Mammary epithelial cell (primary cell): ENCODE measurements at regions of chrX and their contacts with region 1.

Region 1: GRCh38 chrX:10597871-10598270 is 22.5 kb downstream of the MID1 start:
- DNase-seq: no peak
- H3K4me3 ChIP-seq: no peak overlapping the region
- H3K27ac ChIP-seq: no peak overlapping the region
- H3K4me1 ChIP-seq: no peaks in the 10 kb centered on the region
- H3K27me3 ChIP-seq: no peaks in the 10 kb centered on the region
- CTCF ChIP-seq: peak; percentile 43 to 65

Region 2: GRCh38 chrX:10450229-10450958 is 147.5 kb before region 1 on chrX:
- CTCF ChIA-PET with region 1: no interaction called
- dilution Hi-C with region 1: no loop called
- in situ Hi-C with region 1: no loop called
- intact Hi-C with region 1: no loop called
- DNase-seq: peak; percentile 66
- H3K4me3 ChIP-seq: no peak overlapping the region
- H3K27ac ChIP-seq: no peak overlapping the region
- H3K4me1 ChIP-seq: peaks cover 25% of the 10 kb centered on the region
- H3K27me3 ChIP-seq: no peaks in the 10 kb centered on the region
- CTCF ChIP-seq: no peak

Region 3: GRCh38 chrX:10484676-10485247 is 113.1 kb before region 1 on chrX:
- CTCF ChIA-PET with region 1: no interaction called
- dilution Hi-C with region 1: no loop called
- in situ Hi-C with region 1: no loop called
- intact Hi-C with region 1: loop called (anchors 1 kb)
- DNase-seq: peak; percentile 79
- H3K4me3 ChIP-seq: no peak overlapping the region
- H3K27ac ChIP-seq: peak overlapping the region; percentile 72
- H3K4me1 ChIP-seq: peaks cover 25% of the 10 kb centered on the region
- H3K27me3 ChIP-seq: no peaks in the 10 kb centered on the region
- CTCF ChIP-seq: no peak

Region 4: DNA sequence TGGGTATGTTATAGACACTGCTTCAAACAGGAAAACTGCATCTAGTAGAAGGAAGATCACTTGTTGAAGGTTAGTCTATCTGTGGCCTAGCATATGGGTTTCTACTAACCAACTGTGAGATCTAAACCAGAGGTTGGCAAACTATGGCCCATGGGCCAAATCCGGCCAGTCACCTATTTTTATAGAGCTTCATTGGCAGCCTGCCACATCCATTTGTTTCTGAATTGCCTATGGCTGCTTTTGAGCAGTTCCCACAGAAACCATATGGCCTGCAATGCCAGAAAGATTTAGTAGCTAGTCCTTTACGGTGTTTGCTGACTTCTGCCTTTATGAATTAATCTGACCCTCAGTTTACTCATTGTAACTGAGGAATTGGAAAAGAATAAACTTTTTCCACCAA is 48.6 kb before region 1 on chrX:
- CTCF ChIA-PET with region 1: no interaction called
- dilution Hi-C with region 1: no loop called
- in situ Hi-C with region 1: no loop called
- intact Hi-C with region 1: no loop called
- DNase-seq: peak; percentile 25
- H3K4me3 ChIP-seq: no peak overlapping the region
- H3K27ac ChIP-seq: no peak overlapping the region
- H3K4me1 ChIP-seq: no peaks in the 10 kb centered on the region
- H3K27me3 ChIP-seq: no peaks in the 10 kb centered on the region
- CTCF ChIP-seq: no peak

Region 5: DNA sequence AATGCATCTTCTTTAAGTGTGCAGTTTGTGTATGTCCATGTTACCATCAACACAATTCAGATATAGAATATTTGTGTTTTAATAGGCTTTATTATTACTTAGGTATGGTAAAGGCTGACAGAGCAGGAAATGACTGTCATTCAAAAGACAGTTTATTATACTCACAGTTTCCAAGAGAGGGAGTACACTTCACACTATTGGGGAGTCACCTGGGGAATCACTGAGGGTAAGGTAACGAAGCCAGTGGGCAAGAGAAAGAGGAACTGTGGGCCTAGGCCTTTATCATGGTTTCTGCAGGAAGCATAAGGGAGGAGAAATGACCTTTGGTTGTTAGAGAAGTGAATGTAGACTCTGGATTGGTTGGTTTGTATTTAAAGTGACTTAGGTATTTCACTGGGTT is 278.1 kb after region 1 on chrX:
- CTCF ChIA-PET with region 1: no interaction called
- dilution Hi-C with region 1: no loop called
- in situ Hi-C with region 1: no loop called
- intact Hi-C with region 1: no loop called
- DNase-seq: no peak
- H3K4me3 ChIP-seq: no peak overlapping the region
- H3K27ac ChIP-seq: no peak overlapping the region
- H3K4me1 ChIP-seq: no peaks in the 10 kb centered on the region
- H3K27me3 ChIP-seq: no peaks in the 10 kb centered on the region
- CTCF ChIP-seq: no peak